Activated T-helper 1 cell treated with anti-CD3 and anti-CD28 coated beads, Interleukin-12 subunit alpha, Interleukin-12 subunit beta, Interleukin-2, Interleukin-4 antibody, amounts not matched to agents 30 ng/mL and 10 ng/mL and 1 ng/mL, durations not matched to agents 14 hours and 24 hours and 36 hours (primary cell): ENCODE measurements at regions of chr1 and their contacts with region 1.

Region 1: GRCh38 chr1:246110343-246111219 is 396.5 kb downstream of the SMYD3 start:
- DNase-seq: no peak
- H3K4me3 Mint-ChIP-seq: no peak overlapping the region
- H3K27ac Mint-ChIP-seq: no peak overlapping the region
- H3K4me1 Mint-ChIP-seq: no peaks in the 10 kb centered on the region
- H3K27me3 Mint-ChIP-seq: no peaks in the 10 kb centered on the region

Region 2: GRCh38 chr1:245978915-245979314 is 131.7 kb before region 1 on chr1:
- intact Hi-C with region 1: no loop called
- DNase-seq: no peak
- H3K4me3 Mint-ChIP-seq: no peak overlapping the region
- H3K27ac Mint-ChIP-seq: no peak overlapping the region
- H3K4me1 Mint-ChIP-seq: no peaks in the 10 kb centered on the region
- H3K27me3 Mint-ChIP-seq: no peaks in the 10 kb centered on the region

Region 3: GRCh38 chr1:246063013-246063616 is 47.5 kb before region 1 on chr1:
- intact Hi-C with region 1: loop called (anchors 5 kb)
- DNase-seq: no peak
- H3K4me3 Mint-ChIP-seq: no peak overlapping the region
- H3K27ac Mint-ChIP-seq: no peak overlapping the region
- H3K4me1 Mint-ChIP-seq: peaks cover 7% of the 10 kb centered on the region
- H3K27me3 Mint-ChIP-seq: no peaks in the 10 kb centered on the region

Region 4: DNA sequence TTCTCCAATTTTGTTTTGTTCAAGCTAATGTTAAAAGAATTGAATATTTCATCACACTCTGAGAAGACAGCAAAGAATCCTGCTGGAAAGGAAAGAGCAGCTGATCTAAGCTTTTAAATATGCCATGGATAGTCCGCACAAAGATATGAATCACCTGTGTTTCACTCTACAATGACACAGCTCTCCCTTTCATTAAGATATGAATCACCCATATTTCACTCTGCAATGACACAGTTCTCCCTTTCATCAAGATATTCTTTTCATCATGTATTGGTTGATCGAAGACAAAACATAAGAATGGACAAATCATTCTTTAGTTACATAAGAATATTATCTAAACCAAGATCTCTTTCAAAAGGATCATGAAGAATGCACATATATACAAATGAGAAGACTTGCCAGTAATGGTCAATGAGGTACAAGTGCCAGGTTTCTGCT is 29.2 kb after region 1 on chr1:
- intact Hi-C with region 1: no loop called
- DNase-seq: no peak
- H3K4me3 Mint-ChIP-seq: no peak overlapping the region
- H3K27ac Mint-ChIP-seq: no peak overlapping the region
- H3K4me1 Mint-ChIP-seq: no peaks in the 10 kb centered on the region
- H3K27me3 Mint-ChIP-seq: no peaks in the 10 kb centered on the region

Region 5: GRCh38 chr1:247685236-247685635 is 1574.7 kb after region 1 on chr1:
- intact Hi-C with region 1: no loop called
- DNase-seq: no peak
- H3K4me3 Mint-ChIP-seq: no peak overlapping the region
- H3K27ac Mint-ChIP-seq: no peak overlapping the region
- H3K4me1 Mint-ChIP-seq: no peaks in the 10 kb centered on the region
- H3K27me3 Mint-ChIP-seq: peaks cover 3% of the 10 kb centered on the region